Heart right ventricle (tissue), 16 donors: ENCODE measurements at regions of chr10 and their contacts with region 1.

Region 1: GRCh38 chr10:689433-690371 is at the start of gene DIP2C:
- DNase-seq: peak; percentile 72 to 81
- ATAC-seq: peak; percentile 74 to 90 (median 83)
- H3K4me3 ChIP-seq: peak within 1 kb of the TSS; percentile 62 to 92 (median 84)
- H3K27ac ChIP-seq: peak within 1 kb of the TSS; percentile 77 to 94 (median 88)
- H3K4me1 ChIP-seq: peaks cover 5 to 24% (median 16%) of the 10 kb centered on the region in 9 donors
- H3K27me3 ChIP-seq: peaks cover 0 to 12% (median 0%) of the 10 kb centered on the region in 7 donors
- CTCF ChIP-seq: no peak
- total RNA-seq, gene DIP2C: 27.6 to 48.2 (median 35.4) TPM

Region 2: GRCh38 chr10:500876-501275 is 188.8 kb before region 1 on chr10:
- intact Hi-C with region 1: loop called in 1 of 10 experiments (anchors 10 kb)
- DNase-seq: no peak
- ATAC-seq: no peak
- H3K4me3 ChIP-seq: no peak overlapping the region
- H3K27ac ChIP-seq: no peak overlapping the region
- H3K4me1 ChIP-seq: peaks cover 0 to 37% (median 21%) of the 10 kb centered on the region in 9 donors
- H3K27me3 ChIP-seq: no peaks in the 10 kb centered on the region
- CTCF ChIP-seq: no peak

Region 3: DNA sequence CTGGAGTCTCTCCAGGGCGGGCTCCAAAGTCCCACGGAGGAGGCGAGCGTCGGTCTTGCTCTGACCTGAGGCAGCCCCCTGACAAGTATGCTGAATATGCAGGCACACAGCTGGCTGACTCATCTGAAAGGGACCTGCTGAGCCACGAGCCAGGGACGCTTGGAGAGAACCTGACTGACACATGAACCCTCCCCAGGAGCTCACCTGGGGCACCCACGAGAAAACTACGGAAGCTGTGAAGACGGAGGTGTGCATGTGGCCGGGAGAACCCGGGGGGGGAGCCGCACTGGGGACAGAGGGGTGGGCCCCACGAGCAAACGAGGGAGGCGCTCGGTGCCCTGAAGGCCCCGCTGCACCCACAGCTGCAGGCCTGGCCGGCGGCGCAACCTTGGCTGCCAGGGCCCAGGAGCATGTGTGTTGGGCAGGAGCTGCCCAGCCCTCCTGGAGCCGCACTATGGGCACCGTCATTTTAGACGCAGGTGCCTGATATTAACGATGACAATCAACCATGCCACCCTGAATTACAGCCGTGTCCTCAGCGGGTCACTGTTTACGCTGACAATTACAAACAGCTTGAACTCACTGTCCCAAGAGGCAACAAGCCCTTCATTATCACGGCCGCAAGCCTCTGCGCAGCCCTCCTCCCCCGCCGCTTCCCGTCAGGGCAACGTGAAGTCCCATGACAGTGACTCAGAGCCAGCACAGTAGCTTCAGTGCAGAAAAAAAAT is 64.9 kb before region 1 on chr10:
- intact Hi-C with region 1: loop called in 4 of 10 experiments (anchors 5 to 10 kb)
- DNase-seq: peak; percentile 72 to 79
- ATAC-seq: peak; percentile 81 to 92 (median 90)
- H3K4me3 ChIP-seq: peak overlapping the region in 8 of 10 donors; percentile 1 to 40 (median 24)
- H3K27ac ChIP-seq: peak overlapping the region; percentile 70 to 94 (median 82)
- H3K4me1 ChIP-seq: peaks cover 10 to 58% (median 32%) of the 10 kb centered on the region in 9 donors
- H3K27me3 ChIP-seq: peaks cover 0 to 3% (median 0%) of the 10 kb centered on the region in 7 donors
- CTCF ChIP-seq: peak in 1 of 9 donors; percentile 10